ENCODE measurements at regions of chr10 and their contacts with region 1.

Region 1: GRCh38 chr10:82796510-82796909 is 921.5 kb downstream of the NRG3 start:
- DNase-seq: no peak
- H3K4me3 ChIP-seq: no peak overlapping the region
- H3K4me3 Mint-ChIP-seq: no peak overlapping the region
- H3K27ac Mint-ChIP-seq: no peak overlapping the region
- H3K4me1 ChIP-seq: no peaks in the 10 kb centered on the region
- H3K4me1 Mint-ChIP-seq: peaks cover 8% of the 10 kb centered on the region
- H3K27me3 ChIP-seq: no peaks in the 10 kb centered on the region
- H3K27me3 Mint-ChIP-seq: no peaks in the 10 kb centered on the region
- CTCF ChIP-seq: peak; percentile 37 to 40

Region 2: DNA sequence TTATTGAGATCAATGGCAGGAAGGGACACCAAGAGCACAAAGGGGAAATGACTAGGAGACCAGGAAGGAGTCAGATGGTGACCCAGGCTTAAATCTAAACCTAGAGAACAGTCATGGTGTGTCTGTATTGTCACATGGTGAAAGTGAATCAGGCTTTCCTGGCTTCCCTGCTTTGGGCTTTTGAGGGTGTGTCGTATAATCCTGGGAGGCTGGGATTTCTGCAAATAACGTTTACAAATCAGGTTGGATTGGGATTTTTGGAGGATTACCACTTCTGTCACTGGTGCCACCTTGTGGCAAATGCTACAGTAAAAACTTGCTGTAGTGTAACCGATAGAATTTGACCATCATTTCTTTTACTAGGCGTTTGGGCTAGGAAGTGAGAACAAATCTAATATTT is 418.9 kb before region 1 on chr10:
- CTCF ChIA-PET with region 1: no interaction called
- POLR2A ChIA-PET with region 1: no interaction called
- intact Hi-C with region 1: loop called (anchors 10 kb)
- DNase-seq: peak in 1 of 2 experiments; percentile 13
- H3K4me3 ChIP-seq: no peak overlapping the region
- H3K4me3 Mint-ChIP-seq: no peak overlapping the region
- H3K27ac Mint-ChIP-seq: no peak overlapping the region
- H3K4me1 ChIP-seq: no peaks in the 10 kb centered on the region
- H3K4me1 Mint-ChIP-seq: no peaks in the 10 kb centered on the region
- H3K27me3 ChIP-seq: no peaks in the 10 kb centered on the region
- H3K27me3 Mint-ChIP-seq: no peaks in the 10 kb centered on the region
- CTCF ChIP-seq: peak; percentile 32 to 41

Region 3: DNA sequence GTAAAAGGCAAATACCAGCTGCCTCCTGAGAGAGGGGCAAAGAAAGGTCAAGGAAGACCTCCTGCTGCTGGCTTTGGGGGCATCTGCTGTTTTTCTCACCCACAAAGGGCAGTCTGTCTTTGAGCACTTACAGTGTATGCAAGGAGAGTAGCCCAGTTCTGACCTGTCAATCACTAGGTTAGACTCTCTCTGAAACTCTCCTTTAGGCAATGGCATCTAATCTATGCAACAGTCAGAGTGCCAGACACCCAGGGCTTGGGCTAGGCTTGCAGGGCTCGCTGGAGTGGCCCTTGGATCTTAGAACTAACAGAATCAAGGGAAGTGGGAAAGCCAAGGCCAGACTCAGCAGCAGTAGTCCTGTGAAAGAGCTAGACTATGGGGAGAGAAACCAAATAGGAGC is 398.7 kb before region 1 on chr10:
- CTCF ChIA-PET with region 1: no interaction called
- POLR2A ChIA-PET with region 1: no interaction called
- intact Hi-C with region 1: no loop called
- DNase-seq: no peak
- H3K4me3 ChIP-seq: no peak overlapping the region
- H3K4me3 Mint-ChIP-seq: no peak overlapping the region
- H3K27ac Mint-ChIP-seq: peak overlapping the region; percentile 1
- H3K4me1 ChIP-seq: no peaks in the 10 kb centered on the region; the same call in 1 of the 2 replicates
- H3K4me1 Mint-ChIP-seq: peaks cover 8% of the 10 kb centered on the region
- H3K27me3 ChIP-seq: no peaks in the 10 kb centered on the region
- H3K27me3 Mint-ChIP-seq: no peaks in the 10 kb centered on the region
- CTCF ChIP-seq: no peak

Region 4: DNA sequence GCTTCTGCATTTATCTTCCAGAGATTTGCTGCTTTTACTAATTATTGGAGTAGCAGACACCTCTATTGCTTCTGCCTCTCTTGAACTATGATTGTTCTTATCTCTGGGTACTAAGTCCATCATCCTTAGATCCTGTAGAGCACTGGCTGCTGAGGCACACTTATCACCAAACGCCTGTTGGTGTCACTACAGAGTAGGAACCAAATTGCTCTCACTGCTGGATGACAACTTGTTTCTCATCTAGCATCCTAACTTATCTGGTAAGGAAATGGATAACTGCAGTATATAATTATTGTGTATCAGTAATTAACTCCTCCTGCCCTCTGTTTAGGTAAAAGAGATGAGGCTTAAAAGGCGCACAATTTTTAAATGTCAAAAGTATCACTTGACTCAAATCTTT is 137.9 kb after region 1 on chr10:
- CTCF ChIA-PET with region 1: no interaction called
- POLR2A ChIA-PET with region 1: no interaction called
- intact Hi-C with region 1: loop called (anchors 1 kb)
- DNase-seq: peak; percentile 53 to 55
- H3K4me3 ChIP-seq: no peak overlapping the region
- H3K4me3 Mint-ChIP-seq: no peak overlapping the region
- H3K27ac Mint-ChIP-seq: no peak overlapping the region
- H3K4me1 ChIP-seq: peaks cover 4% of the 10 kb centered on the region; the same call in 1 of the 2 replicates
- H3K4me1 Mint-ChIP-seq: peaks cover 8% of the 10 kb centered on the region
- H3K27me3 ChIP-seq: no peaks in the 10 kb centered on the region
- H3K27me3 Mint-ChIP-seq: no peaks in the 10 kb centered on the region
- CTCF ChIP-seq: peak; percentile 47 to 59

Region 5: GRCh38 chr10:83373671-83374070 is 577.2 kb after region 1 on chr10:
- CTCF ChIA-PET with region 1: no interaction called
- POLR2A ChIA-PET with region 1: no interaction called
- intact Hi-C with region 1: loop called (anchors 5 kb)
- DNase-seq: peak in 1 of 2 experiments; percentile 43
- H3K4me3 ChIP-seq: no peak overlapping the region
- H3K4me3 Mint-ChIP-seq: no peak overlapping the region
- H3K27ac Mint-ChIP-seq: no peak overlapping the region
- H3K4me1 ChIP-seq: no peaks in the 10 kb centered on the region
- H3K4me1 Mint-ChIP-seq: no peaks in the 10 kb centered on the region
- H3K27me3 ChIP-seq: no peaks in the 10 kb centered on the region
- H3K27me3 Mint-ChIP-seq: peaks cover 4% of the 10 kb centered on the region
- CTCF ChIP-seq: peak; percentile 27 to 47